Ascending aorta (tissue), 2 donors: ENCODE measurements at regions of chr6 and their contacts with region 1.

Region 1: GRCh38 chr6:28940858-28941680 is 17.3 kb upstream of the TRIM27 start:
- DNase-seq: peak; percentile 31 to 89
- H3K4me3 ChIP-seq: peak overlapping the region; percentile 77 to 81
- H3K27ac ChIP-seq: peak overlapping the region; percentile 89 to 91
- H3K4me1 ChIP-seq: no peaks in the 10 kb centered on the region
- H3K27me3 ChIP-seq: no peaks in the 10 kb centered on the region
- CTCF ChIP-seq: no peak

Region 2: DNA sequence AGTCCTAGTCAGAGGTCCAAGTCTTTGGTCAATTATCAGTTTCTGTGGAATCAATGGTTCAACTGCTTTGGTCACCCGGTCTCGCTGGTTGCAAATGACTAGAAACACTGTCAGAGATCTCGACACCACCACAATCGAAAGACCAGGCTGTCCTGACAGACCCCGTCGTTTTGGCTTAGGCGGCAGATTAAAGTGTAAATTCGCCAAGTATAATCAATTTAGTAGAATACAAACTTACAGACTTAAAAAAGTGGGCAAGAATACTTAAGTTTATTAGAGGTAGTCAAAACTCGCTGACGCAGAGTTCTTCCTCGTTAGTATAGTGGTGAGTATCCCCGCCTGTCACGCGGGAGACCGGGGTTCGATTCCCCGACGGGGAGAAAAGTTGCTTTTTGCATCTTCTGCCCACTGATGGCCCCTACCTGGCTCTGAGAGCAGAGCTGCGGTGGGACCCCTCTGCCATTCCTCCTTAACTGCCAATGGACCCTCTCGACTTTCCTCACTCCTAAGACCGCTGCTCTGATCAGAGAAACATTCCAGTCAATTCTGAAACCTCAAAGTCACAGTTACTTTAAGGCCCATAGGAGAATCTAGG is 1437.5 kb before region 1 on chr6:
- intact Hi-C with region 1: loop called (anchors 10 kb)
- DNase-seq: peak in 1 of 2 donors; percentile 78
- H3K4me3 ChIP-seq: peak overlapping the region; percentile 49 to 59
- H3K27ac ChIP-seq: peak overlapping the region in 1 of 2 donors; percentile 31
- H3K4me1 ChIP-seq: no peaks in the 10 kb centered on the region
- H3K27me3 ChIP-seq: no peaks in the 10 kb centered on the region
- CTCF ChIP-seq: no peak

Region 3: DNA sequence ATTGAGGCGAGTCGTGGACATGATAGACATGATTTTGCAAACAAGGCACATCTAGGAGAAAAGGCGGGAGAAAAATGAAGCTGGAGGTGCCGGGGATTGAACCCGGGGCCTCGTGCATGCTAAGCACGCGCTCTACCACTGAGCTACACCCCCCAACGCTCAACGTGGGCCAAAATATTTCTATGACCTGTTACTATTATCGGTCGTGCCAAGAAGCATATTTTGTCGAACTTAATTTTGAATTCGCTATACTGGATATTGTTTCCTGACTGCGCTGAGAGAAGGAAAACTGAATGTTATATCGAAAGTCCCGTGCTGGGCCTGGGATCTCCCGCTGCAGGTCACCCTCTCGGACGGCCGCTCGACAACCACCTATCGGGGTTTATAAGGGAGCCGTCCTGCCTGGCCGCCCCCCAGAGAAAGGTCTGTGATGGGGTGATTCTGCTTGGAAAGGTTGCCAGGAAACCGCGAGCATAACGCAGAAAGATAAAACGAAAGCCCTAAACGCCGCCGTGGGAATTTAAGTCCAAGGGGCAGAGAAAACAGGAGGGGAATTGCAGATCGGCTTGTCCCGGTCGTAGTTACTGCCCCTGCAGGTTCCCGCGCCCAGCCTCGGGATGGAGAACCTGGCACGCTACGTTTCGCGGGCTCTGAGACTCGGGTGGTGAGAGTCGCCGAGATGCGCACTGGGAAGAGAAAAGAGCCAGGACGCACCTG is 77.3 kb before region 1 on chr6:
- intact Hi-C with region 1: loop called (anchors 1 kb)
- DNase-seq: peak in 1 of 2 donors; percentile 86
- H3K4me3 ChIP-seq: peak overlapping the region; percentile 66 to 81
- H3K27ac ChIP-seq: peak overlapping the region; percentile 59 to 78
- H3K4me1 ChIP-seq: peaks cover 0 to 3% of the 10 kb centered on the region in 2 donors
- H3K27me3 ChIP-seq: no peaks in the 10 kb centered on the region
- CTCF ChIP-seq: no peak

Region 4: GRCh38 chr6:28880894-28881780 is 59.9 kb before region 1 on chr6:
- intact Hi-C with region 1: loop called (anchors 5 kb)
- DNase-seq: peak in 1 of 2 donors; percentile 86
- H3K4me3 ChIP-seq: peak overlapping the region; percentile 48 to 64
- H3K27ac ChIP-seq: no peak overlapping the region
- H3K4me1 ChIP-seq: no peaks in the 10 kb centered on the region
- H3K27me3 ChIP-seq: peaks cover 3% of the 10 kb centered on the region
- CTCF ChIP-seq: no peak

Region 5: DNA sequence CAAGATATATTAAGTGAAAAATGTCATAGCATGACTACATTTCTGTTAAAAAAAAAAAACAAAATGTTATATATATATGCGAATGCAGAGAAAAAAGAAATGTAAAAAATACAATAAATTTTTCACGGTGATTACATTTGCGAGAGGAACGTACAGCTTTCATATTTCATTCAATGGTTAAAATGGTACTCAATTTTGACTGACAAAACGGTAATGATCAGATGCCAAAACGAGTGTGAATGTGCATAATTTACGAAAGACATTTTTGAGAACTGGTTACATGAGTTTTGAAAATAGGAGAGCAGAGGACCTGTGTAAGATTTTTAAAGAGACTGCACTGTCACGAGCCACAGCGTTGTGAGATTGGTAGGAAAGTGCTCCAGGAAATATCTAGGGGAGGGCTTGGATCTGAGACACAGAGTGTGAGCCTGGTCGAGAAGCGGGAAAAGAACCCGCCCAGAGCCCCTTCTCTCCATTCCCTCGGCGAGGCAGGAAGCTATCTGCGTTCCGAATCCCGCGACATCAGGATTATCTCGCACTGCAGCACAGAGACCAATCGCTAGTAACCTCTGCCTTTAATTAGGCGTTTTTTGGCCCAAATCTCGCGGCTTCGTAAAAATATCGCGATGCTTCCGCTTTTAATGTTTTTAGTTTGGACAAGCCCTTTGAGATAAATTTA is 45.8 kb before region 1 on chr6:
- intact Hi-C with region 1: loop called (anchors 1 kb)
- DNase-seq: peak; percentile 86 to 98
- H3K4me3 ChIP-seq: peak overlapping the region; percentile 60 to 72
- H3K27ac ChIP-seq: peak overlapping the region; percentile 95 to 96
- H3K4me1 ChIP-seq: no peaks in the 10 kb centered on the region
- H3K27me3 ChIP-seq: no peaks in the 10 kb centered on the region
- CTCF ChIP-seq: no peak

Region 6: DNA sequence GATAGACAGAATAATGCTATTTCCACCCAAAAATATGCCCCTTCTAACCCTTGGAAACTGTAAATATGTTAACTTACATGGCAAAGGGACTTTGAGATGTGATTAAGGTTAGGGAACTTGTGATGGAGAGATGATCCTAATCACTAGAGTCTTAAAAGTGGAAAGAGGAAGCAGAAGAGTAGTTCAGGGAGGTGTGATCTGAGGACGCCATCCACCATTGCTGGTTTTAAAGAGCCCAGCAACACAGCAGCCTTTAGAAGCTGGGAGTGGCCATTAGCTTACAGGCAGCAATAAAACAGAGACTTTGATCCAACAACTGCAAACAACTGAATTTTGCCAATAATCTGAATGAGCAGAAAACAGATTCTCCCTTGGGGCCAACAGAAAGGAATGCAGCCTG is 33.4 kb after region 1 on chr6:
- intact Hi-C with region 1: no loop called
- DNase-seq: no peak
- H3K4me3 ChIP-seq: no peak overlapping the region
- H3K27ac ChIP-seq: no peak overlapping the region
- H3K4me1 ChIP-seq: no peaks in the 10 kb centered on the region
- H3K27me3 ChIP-seq: no peaks in the 10 kb centered on the region
- CTCF ChIP-seq: no peak

Region 7: GRCh38 chr6:29016559-29017427 is 75.7 kb after region 1 on chr6:
- intact Hi-C with region 1: loop called (anchors 2 kb)
- DNase-seq: peak in 1 of 2 donors; percentile 92
- H3K4me3 ChIP-seq: peak overlapping the region; percentile 47 to 71
- H3K27ac ChIP-seq: peak overlapping the region in 1 of 2 donors; percentile 67
- H3K4me1 ChIP-seq: peaks cover 0 to 2% of the 10 kb centered on the region in 2 donors
- H3K27me3 ChIP-seq: peaks cover 5% of the 10 kb centered on the region
- CTCF ChIP-seq: peak; percentile 53 to 65 (median 61)